Naive thymus-derived CD8-positive, alpha-beta T cell (primary cell): ENCODE measurements at regions of chr5 and their contacts with region 1.

Region 1: DNA sequence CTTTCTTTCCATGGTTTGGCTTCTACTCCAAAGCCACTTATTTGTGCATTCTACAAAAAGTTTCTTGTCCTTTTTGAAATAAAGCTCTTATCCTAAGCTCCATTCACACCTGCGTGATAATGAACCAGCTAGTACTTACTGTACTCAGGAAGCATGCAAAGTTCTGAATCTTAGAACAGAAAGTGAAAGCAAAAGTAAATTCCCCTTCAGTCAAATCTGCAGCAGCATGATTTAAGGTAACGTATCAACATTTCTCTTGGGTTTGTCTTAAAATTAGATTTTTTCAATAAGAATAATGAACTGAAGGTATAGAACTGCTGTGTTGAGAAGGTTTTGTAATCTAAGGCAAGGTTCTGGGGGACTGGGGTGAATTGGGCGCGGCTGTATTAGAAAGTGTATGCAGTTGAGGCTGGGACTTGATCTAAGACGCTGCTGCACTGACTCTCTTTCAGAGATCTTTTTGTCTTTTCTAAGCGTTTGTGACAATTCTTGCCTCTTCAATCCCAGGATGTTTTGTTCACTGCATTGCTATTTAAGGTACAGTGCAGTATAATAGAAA is at the start of gene ERAP2:
- DNase-seq: peak in 5 of 10 donors; percentile 7 to 72 (median 66)
- ATAC-seq: peak; percentile 77 to 82
- H3K4me3 Mint-ChIP-seq: peak within 1 kb of the TSS; percentile 77 to 99 (median 96)
- H3K27ac Mint-ChIP-seq: peak within 1 kb of the TSS; percentile 91 to 99 (median 97)
- H3K4me1 Mint-ChIP-seq: peaks cover 43 to 84% (median 63%) of the 10 kb centered on the region in 4 donors
- H3K27me3 Mint-ChIP-seq: no peaks in the 10 kb centered on the region
- polyA plus RNA-seq, gene ERAP2: 6.4 to 126 (median 6.6) TPM

Region 2: GRCh38 chr5:96896806-96897205 is 20.4 kb after region 1 on chr5:
- POLR2A ChIA-PET with region 1: interaction called, 10 read pairs
- DNase-seq: no peak
- ATAC-seq: peak; percentile 52 to 60
- H3K4me3 Mint-ChIP-seq: peak overlapping the region; percentile 48 to 86 (median 78)
- H3K27ac Mint-ChIP-seq: peak overlapping the region; percentile 72 to 95 (median 88)
- H3K4me1 Mint-ChIP-seq: peaks cover 29 to 76% (median 47%) of the 10 kb centered on the region in 4 donors
- H3K27me3 Mint-ChIP-seq: no peaks in the 10 kb centered on the region

Region 3: DNA sequence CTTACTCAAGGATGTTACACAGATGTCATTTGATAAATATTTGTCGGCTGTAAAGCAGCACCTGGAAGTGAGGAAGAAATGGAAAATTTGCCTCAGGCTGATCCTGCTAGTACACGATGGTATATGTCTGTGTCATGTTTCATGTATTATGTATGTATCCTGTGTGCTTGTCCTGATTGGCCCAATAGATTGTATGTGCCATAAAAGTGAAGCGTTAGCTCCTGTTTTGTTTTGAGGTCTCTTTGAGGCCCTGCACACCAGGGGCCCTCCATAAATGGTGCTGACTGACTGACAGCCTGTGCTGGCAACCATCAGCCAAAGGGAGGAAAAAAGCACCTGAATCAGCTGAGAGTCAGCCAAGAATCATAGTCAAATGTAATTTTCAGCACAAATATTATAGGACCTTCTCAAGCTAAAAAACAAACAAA is 47.7 kb after region 1 on chr5:
- POLR2A ChIA-PET with region 1: interaction called, 18 read pairs
- DNase-seq: peak in 8 of 10 donors; percentile 13 to 71 (median 50)
- ATAC-seq: peak; percentile 97
- H3K4me3 Mint-ChIP-seq: peak overlapping the region; percentile 9 to 74 (median 58)
- H3K27ac Mint-ChIP-seq: peak overlapping the region; percentile 84 to 98 (median 94)
- H3K4me1 Mint-ChIP-seq: peaks cover 18 to 77% (median 54%) of the 10 kb centered on the region in 4 donors
- H3K27me3 Mint-ChIP-seq: no peaks in the 10 kb centered on the region

Region 4: DNA sequence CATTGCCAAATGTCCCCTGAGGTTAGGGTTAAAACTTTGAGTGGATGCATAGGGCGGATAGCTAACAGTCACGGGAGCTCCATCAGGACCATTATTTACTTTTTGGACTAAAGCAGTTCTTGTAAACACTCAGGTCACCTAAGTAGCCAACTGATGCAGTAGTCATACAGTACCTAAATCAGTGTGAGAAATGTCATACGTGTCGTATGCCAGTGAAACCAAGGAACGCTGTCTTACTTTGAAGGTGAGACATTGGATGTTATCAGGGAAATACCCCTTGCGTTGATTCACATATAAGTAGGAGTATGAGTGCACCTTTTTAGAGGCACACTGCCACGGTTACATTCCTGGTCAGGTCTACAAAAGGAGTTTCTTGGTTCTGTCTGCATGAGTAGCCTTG is 161.4 kb after region 1 on chr5:
- POLR2A ChIA-PET with region 1: no interaction called
- DNase-seq: no peak
- ATAC-seq: no peak
- H3K4me3 Mint-ChIP-seq: no peak overlapping the region
- H3K27ac Mint-ChIP-seq: peak overlapping the region in 4 of 10 donors; percentile 24 to 70 (median 54)
- H3K4me1 Mint-ChIP-seq: peaks cover 0 to 15% (median 4%) of the 10 kb centered on the region in 4 donors
- H3K27me3 Mint-ChIP-seq: no peaks in the 10 kb centered on the region